CD4-positive, alpha-beta memory T cell (primary cell): ENCODE measurements at regions of chr20 and their contacts with region 1.

Region 1: DNA sequence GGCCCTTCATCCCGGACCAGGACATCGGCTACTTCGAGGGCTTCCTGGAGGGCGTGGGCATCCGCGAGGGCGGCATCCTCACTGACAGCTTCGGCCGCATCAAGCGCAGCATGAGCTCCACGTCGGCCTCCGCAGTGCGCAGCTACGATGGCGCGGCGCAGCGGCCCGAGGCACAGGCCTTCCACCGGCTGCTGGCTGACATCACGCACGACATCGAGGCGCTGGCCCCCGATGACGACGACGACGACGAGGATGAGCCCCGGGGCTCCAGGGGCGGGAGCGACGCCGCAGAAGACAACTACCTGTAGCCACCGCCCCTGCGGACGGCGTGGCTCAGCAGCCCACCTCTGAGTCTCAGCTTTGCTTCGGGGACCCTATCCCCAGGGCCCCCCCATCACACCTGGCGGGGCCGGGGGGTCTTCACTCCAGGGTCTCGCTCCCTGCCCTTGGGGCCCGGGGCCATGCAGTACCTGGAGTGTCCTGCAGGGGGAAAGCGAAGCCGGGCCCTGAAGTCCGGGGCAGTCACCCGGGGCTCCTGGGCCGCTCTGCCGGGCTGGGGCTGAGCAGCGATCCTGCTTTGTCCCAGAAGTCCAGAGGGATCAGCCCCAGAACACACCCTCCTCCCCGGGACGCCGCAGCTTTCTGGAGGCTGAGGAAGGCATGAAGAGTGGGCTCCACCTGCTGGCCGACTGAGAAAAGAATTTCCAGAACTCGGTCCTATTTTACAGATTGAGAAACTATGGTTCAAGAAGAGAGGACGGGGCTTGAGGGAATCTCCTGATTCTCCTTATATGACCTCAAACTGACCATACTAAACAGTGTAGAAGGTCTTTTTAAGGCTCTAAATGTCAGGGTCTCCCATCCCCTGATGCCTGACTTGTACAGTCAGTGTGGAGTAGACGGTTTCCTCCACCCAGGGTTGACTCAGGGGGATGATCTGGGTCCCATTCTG is 20.8 kb upstream of the HCK start:
- DNase-seq: peak; percentile 48 to 66 (median 55)
- H3K4me3 ChIP-seq: no peak overlapping the region
- H3K4me3 Mint-ChIP-seq: peak overlapping the region in 6 of 8 donors; percentile 17 to 57 (median 42)
- H3K27ac ChIP-seq: no peak overlapping the region
- H3K27ac Mint-ChIP-seq: no peak overlapping the region
- H3K4me1 ChIP-seq: no peaks in the 10 kb centered on the region
- H3K4me1 Mint-ChIP-seq: no peaks in the 10 kb centered on the region
- H3K27me3 ChIP-seq: peaks cover 3% of the 10 kb centered on the region
- H3K27me3 Mint-ChIP-seq: peaks cover 10 to 17% of the 10 kb centered on the region in 2 donors

Region 2: DNA sequence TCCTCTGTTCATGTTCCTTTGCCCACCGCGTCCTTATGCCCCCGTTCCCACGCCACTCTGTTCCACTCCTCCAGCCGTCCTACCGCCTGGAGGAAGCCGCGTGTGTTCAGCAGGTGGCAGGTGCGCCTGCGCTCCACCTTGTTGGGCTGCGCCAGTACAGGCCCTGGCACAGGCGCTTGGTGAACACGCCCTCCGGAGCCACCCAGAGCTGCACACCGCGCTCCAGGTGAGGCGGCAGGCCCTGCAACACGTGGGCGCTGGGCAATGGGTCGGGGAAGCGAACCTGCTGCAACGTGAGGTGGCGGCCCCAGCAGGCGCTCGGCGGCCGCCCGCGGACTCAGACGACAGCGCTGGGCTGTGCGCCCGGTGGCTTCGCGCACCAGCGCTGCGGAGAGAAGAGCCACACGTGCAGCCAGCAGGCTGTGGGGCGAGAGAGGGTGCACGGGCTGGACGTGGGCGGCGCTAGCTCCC is 181.8 kb before region 1 on chr20:
- CTCF ChIA-PET with region 1: interaction called, 78 read pairs
- POLR2A ChIA-PET with region 1: interaction called, 3 read pairs
- intact Hi-C with region 1: no loop called
- DNase-seq: no peak
- H3K4me3 ChIP-seq: no peak overlapping the region
- H3K4me3 Mint-ChIP-seq: no peak overlapping the region
- H3K27ac ChIP-seq: no peak overlapping the region
- H3K27ac Mint-ChIP-seq: no peak overlapping the region
- H3K4me1 ChIP-seq: no peaks in the 10 kb centered on the region
- H3K4me1 Mint-ChIP-seq: no peaks in the 10 kb centered on the region
- H3K27me3 ChIP-seq: no peaks in the 10 kb centered on the region
- H3K27me3 Mint-ChIP-seq: peaks cover 11 to 21% of the 10 kb centered on the region in 2 donors

Region 3: GRCh38 chr20:32007787-32008616 is 23.3 kb before region 1 on chr20:
- CTCF ChIA-PET with region 1: interaction called, 17 read pairs
- POLR2A ChIA-PET with region 1: no interaction called
- intact Hi-C with region 1: no loop called
- DNase-seq: no peak
- H3K4me3 ChIP-seq: no peak overlapping the region
- H3K4me3 Mint-ChIP-seq: no peak overlapping the region
- H3K27ac ChIP-seq: no peak overlapping the region
- H3K27ac Mint-ChIP-seq: no peak overlapping the region
- H3K4me1 ChIP-seq: no peaks in the 10 kb centered on the region
- H3K4me1 Mint-ChIP-seq: no peaks in the 10 kb centered on the region
- H3K27me3 ChIP-seq: no peaks in the 10 kb centered on the region
- H3K27me3 Mint-ChIP-seq: peaks cover 4 to 11% of the 10 kb centered on the region in 2 donors

Region 4: GRCh38 chr20:32018269-32019074 is 12.8 kb before region 1 on chr20:
- CTCF ChIA-PET with region 1: interaction called, 27 read pairs
- POLR2A ChIA-PET with region 1: interaction called, 3 read pairs
- intact Hi-C with region 1: no loop called
- DNase-seq: peak; percentile 31 to 63 (median 42)
- H3K4me3 ChIP-seq: peak overlapping the region in 1 of 2 donors; percentile 52
- H3K4me3 Mint-ChIP-seq: peak overlapping the region; percentile 76 to 88 (median 83)
- H3K27ac ChIP-seq: no peak overlapping the region
- H3K27ac Mint-ChIP-seq: peak overlapping the region in 1 of 7 donors; percentile 17
- H3K4me1 ChIP-seq: peaks cover 13% of the 10 kb centered on the region
- H3K4me1 Mint-ChIP-seq: peaks cover 13 to 26% (median 20%) of the 10 kb centered on the region in 4 donors
- H3K27me3 ChIP-seq: peaks cover 23% of the 10 kb centered on the region
- H3K27me3 Mint-ChIP-seq: peaks cover 54 to 66% of the 10 kb centered on the region in 2 donors

Region 5: DNA sequence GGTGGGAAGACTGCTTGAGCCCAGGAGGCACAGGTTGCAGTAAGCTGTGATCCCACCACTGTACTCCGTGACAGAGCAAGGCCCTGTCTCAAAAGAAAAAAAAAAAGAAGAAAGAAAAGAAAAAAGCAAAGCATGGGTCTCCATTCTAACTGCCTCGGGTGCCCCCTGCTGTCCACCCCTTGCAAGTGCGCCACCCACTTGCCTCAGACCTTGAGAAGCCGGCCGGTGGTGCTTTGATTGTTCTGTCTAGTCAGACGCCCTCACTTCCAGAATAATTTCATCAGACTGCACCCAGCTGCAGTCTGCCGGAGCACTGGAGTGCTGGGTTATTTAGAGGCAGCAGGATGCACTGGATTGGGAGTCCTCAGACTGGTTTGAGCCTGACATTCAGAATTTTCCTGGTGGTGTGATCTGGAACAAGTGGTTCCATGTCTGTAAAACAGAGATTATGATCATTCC is 60.6 kb after region 1 on chr20:
- CTCF ChIA-PET with region 1: interaction called, 13 read pairs
- POLR2A ChIA-PET with region 1: no interaction called
- intact Hi-C with region 1: no loop called
- DNase-seq: peak; percentile 60 to 71 (median 69)
- H3K4me3 ChIP-seq: no peak overlapping the region
- H3K4me3 Mint-ChIP-seq: peak overlapping the region in 1 of 8 donors; percentile 43
- H3K27ac ChIP-seq: no peak overlapping the region
- H3K27ac Mint-ChIP-seq: no peak overlapping the region
- H3K4me1 ChIP-seq: no peaks in the 10 kb centered on the region
- H3K4me1 Mint-ChIP-seq: peaks cover 0 to 4% (median 0%) of the 10 kb centered on the region in 4 donors
- H3K27me3 ChIP-seq: no peaks in the 10 kb centered on the region
- H3K27me3 Mint-ChIP-seq: peaks cover 3 to 4% of the 10 kb centered on the region in 2 donors